H1 (cell line): ENCODE measurements at regions of chr2 and their contacts with region 1.

Region 1: GRCh38 chr2:64595397-64596160 is 58.1 kb downstream of the SERTAD2 start:
- DNase-seq: no peak
- H3K4me3 ChIP-seq: no peak overlapping the region
- H3K27ac ChIP-seq: no peak overlapping the region
- H3K4me1 ChIP-seq: no peaks in the 10 kb centered on the region
- H3K27me3 ChIP-seq: no peaks in the 10 kb centered on the region
- CTCF ChIP-seq: peak in 2 of 3 experiments; percentile 64 to 68; a peak in 3 of 4 replicates
- EP300 ChIP-seq: no peak
- POLR2A ChIP-seq: no peak
- RAD21 ChIP-seq: peak; percentile 73 to 84

Region 2: GRCh38 chr2:64524604-64525316 is 70.8 kb before region 1 on chr2:
- CTCF ChIA-PET with region 1: no interaction called
- POLR2A ChIA-PET with region 1: no interaction called
- DNase-seq: no peak
- H3K4me3 ChIP-seq: peak overlapping the region; percentile 73 to 88 (median 82)
- H3K27ac ChIP-seq: peak overlapping the region; percentile 48
- H3K4me1 ChIP-seq: peaks cover 0 to 4% (median 0%) of the 10 kb centered on the region in 4 experiments; a peak in 1 of 7 replicates
- H3K27me3 ChIP-seq: no peaks in the 10 kb centered on the region
- CTCF ChIP-seq: no peak
- EP300 ChIP-seq: no peak
- POLR2A ChIP-seq: no peak
- RAD21 ChIP-seq: no peak

Region 3: DNA sequence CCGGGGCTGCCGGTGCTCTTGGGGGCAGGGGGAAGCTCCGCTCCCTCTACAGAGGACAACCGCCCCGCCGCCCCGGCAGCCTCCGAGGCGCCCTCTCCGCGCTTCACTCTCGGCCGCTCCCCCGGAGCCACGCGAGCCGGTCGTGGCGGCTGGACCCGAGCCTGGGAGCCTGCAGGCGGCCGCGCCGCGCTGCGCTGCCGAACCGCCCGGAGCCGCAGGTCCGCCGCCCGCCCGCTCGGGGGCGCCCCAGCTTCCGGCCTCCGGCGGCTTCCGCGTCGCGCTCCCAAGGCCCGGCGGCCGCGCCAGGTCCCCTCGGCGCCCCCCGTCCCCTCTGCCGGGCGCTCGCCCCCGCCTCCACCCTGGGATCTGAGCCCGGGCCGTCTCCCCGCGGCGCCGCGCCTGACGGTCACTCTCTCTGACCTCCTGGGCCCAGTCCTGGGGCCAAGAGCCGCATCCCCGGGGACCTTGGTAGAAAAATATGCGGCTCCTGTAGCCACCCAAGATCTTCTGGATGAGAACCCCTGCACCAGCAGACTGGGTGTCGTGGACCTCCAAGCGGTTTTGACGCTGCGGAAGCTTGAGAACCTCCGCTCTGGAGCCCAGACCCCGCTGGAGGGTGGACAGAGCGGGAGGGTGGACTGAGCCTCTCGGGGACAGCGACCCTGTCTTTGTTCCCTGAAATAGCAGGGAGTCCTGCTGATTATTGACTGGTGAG is 13.8 kb after region 1 on chr2:
- CTCF ChIA-PET with region 1: interaction called, 61 read pairs
- POLR2A ChIA-PET with region 1: interaction called, 3 read pairs
- DNase-seq: peak in 1 of 2 experiments; percentile 81
- H3K4me3 ChIP-seq: peak overlapping the region; percentile 54 to 79 (median 64)
- H3K27ac ChIP-seq: no peak overlapping the region
- H3K4me1 ChIP-seq: peaks cover 2 to 14% (median 6%) of the 10 kb centered on the region in 4 experiments
- H3K27me3 ChIP-seq: peaks cover 0 to 11% (median 9%) of the 10 kb centered on the region in 4 experiments; a peak in 6 of 7 replicates
- CTCF ChIP-seq: peak; percentile 58 to 76 (median 68)
- EP300 ChIP-seq: no peak
- POLR2A ChIP-seq: peak in 1 of 2 experiments; percentile 38; a peak in 1 of 3 replicates
- RAD21 ChIP-seq: peak in 1 of 2 experiments; percentile 49; a peak in 2 of 4 replicates

Region 4: GRCh38 chr2:64865073-64865830 is 269.7 kb after region 1 on chr2:
- CTCF ChIA-PET with region 1: interaction called, 20 read pairs
- POLR2A ChIA-PET with region 1: no interaction called
- DNase-seq: peak in 1 of 2 experiments; percentile 78
- H3K4me3 ChIP-seq: peak overlapping the region; percentile 39 to 80 (median 54)
- H3K27ac ChIP-seq: no peak overlapping the region
- H3K4me1 ChIP-seq: peaks cover 0 to 7% (median 6%) of the 10 kb centered on the region in 4 experiments
- H3K27me3 ChIP-seq: peaks cover 3 to 37% (median 32%) of the 10 kb centered on the region in 4 experiments
- CTCF ChIP-seq: peak; percentile 67 to 76 (median 68)
- EP300 ChIP-seq: no peak
- POLR2A ChIP-seq: no peak
- RAD21 ChIP-seq: peak; percentile 45 to 81; a peak in 3 of 4 replicates

Region 5: DNA sequence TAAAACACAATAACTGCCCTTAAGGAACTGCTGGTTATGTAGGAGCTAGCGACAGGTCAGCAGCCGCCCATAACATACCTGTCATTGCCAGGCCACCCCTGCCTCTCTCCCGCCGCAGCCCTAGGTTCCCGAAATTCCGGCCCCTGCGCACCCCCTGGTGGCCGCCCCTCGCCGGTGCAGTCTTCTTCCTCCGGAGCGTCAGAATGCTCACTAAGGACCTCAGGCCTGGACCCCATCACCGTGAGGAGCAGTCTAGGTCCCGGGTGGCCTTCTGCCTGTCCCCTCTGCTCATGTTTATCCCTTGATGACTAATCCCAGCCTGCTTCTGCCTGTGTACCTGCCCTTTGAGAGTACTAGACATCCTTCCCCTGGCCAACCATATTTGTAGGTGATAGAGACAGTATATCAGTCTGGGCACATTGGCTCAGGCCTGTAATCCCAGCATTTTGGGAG is 277.9 kb after region 1 on chr2:
- CTCF ChIA-PET with region 1: interaction called, 20 read pairs
- POLR2A ChIA-PET with region 1: no interaction called
- DNase-seq: peak in 1 of 2 experiments; percentile 99
- H3K4me3 ChIP-seq: no peak overlapping the region
- H3K27ac ChIP-seq: no peak overlapping the region
- H3K4me1 ChIP-seq: peaks cover 3 to 8% (median 4%) of the 10 kb centered on the region in 4 experiments; a peak in 4 of 7 replicates
- H3K27me3 ChIP-seq: no peaks in the 10 kb centered on the region; a peak in 1 of 7 replicates
- CTCF ChIP-seq: peak; percentile 92 to 95 (median 95)
- EP300 ChIP-seq: no peak
- POLR2A ChIP-seq: no peak
- RAD21 ChIP-seq: peak; percentile 90 to 94